ENCODE measurements at regions of chr22 and their contacts with region 1.

Region 1: GRCh38 chr22:35998748-35999147 is 29.9 kb downstream of the RBFOX2 start:
- DNase-seq: no peak
- H3K4me3 ChIP-seq: no peak overlapping the region
- H3K27ac ChIP-seq: no peak overlapping the region
- H3K4me1 ChIP-seq: peaks cover 0 to 28% (median 20%) of the 10 kb centered on the region in 4 donors
- H3K27me3 ChIP-seq: no peaks in the 10 kb centered on the region
- CTCF ChIP-seq: no peak

Region 2: GRCh38 chr22:35978889-35979288 is 19.9 kb before region 1 on chr22:
- intact Hi-C with region 1: loop called (anchors 2 kb)
- DNase-seq: no peak
- H3K4me3 ChIP-seq: no peak overlapping the region
- H3K27ac ChIP-seq: no peak overlapping the region
- H3K4me1 ChIP-seq: peaks cover 0 to 31% (median 14%) of the 10 kb centered on the region in 4 donors
- H3K27me3 ChIP-seq: no peaks in the 10 kb centered on the region
- CTCF ChIP-seq: no peak